ENCODE measurements at regions of chr2 and their contacts with region 1.

Region 1: DNA sequence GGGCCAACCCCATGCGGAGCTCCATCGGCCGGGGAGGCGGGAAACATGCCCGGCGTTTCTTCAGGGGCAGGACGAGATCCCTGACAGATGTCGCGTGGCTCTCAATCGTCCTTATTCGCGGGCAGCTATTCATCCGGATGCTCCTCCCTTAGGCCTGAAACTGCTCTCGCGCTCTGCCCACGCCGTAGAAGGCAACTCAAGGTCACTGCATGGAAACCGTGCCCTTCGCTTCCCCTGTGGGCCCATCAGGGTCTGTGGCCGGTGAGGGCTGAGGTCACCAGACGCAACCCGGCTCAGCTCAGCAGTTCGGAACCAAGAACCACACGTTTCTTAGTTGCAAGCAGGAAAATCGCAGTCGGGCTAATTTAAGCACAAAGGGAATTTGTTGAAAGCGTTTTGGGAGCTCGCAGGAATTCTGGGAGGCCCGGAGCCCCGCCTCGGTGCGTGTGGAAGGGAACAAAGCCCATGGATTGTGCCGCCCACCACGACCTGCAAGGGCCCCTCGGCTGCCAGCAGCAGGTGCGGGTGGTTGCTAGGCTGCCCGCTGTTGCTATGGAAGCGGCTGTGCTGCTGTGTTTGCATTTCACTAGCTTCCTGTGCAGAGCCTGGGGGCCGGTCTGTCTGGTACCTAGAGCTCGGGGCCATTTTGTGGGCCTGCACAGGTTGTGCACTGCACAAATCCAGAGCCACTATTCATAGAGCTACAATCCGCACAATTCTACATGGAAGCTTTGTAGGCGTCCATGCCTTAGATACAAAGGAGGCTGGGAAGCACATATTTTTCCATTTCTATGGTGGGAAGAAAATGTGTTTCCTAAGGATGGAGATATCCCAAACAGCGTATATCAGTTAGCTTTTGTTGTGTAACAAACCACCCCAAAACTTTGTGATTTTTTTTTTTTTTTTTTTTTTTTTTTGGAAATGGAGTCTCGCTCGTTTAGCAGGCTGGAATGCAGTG is 6.0 kb upstream of the ALLC start:
- DNase-seq: no peak
- ATAC-seq: no peak
- H3K4me3 ChIP-seq: no peak overlapping the region
- H3K27ac ChIP-seq: no peak overlapping the region
- H3K4me1 ChIP-seq: peaks cover 0 to 28% of the 10 kb centered on the region in 2 experiments; a peak in 3 of 5 replicates
- H3K27me3 ChIP-seq: peaks cover 54 to 92% of the 10 kb centered on the region in 2 experiments
- CTCF ChIP-seq: no peak
- EP300 ChIP-seq: no peak
- POLR2A ChIP-seq: no peak
- RAD21 ChIP-seq: no peak

Region 2: GRCh38 chr2:3423492-3424175 is 228.3 kb before region 1 on chr2:
- CTCF ChIA-PET with region 1: no interaction called
- POLR2A ChIA-PET with region 1: no interaction called
- in situ Hi-C with region 1: loop called (anchors 10 kb)
- intact Hi-C with region 1: loop called (anchors 5 kb)
- DNase-seq: peak; percentile 74 to 82 (median 77)
- ATAC-seq: peak; percentile 96
- H3K4me3 ChIP-seq: no peak overlapping the region
- H3K27ac ChIP-seq: no peak overlapping the region
- H3K4me1 ChIP-seq: peaks cover 0 to 2% of the 10 kb centered on the region in 2 experiments; a peak in 2 of 5 replicates
- H3K27me3 ChIP-seq: no peaks in the 10 kb centered on the region
- CTCF ChIP-seq: peak; percentile 78 to 98 (median 82)
- EP300 ChIP-seq: no peak
- POLR2A ChIP-seq: no peak
- RAD21 ChIP-seq: peak; percentile 11 to 63; a peak in 2 of 4 replicates

Region 3: GRCh38 chr2:3493615-3494007 is 158.4 kb before region 1 on chr2:
- CTCF ChIA-PET with region 1: no interaction called
- POLR2A ChIA-PET with region 1: interaction called, 4 read pairs
- in situ Hi-C with region 1: loop called (anchors 10 kb)
- intact Hi-C with region 1: loop called (anchors 1 kb)
- DNase-seq: peak; percentile 85 to 93 (median 86)
- ATAC-seq: peak; percentile 99
- H3K4me3 ChIP-seq: peak overlapping the region; percentile 21
- H3K27ac ChIP-seq: peak overlapping the region; percentile 60
- H3K4me1 ChIP-seq: peaks cover 12 to 36% of the 10 kb centered on the region in 2 experiments; a peak in 4 of 5 replicates
- H3K27me3 ChIP-seq: no peaks in the 10 kb centered on the region
- CTCF ChIP-seq: no peak
- EP300 ChIP-seq: no peak
- POLR2A ChIP-seq: no peak
- RAD21 ChIP-seq: no peak

Region 4: GRCh38 chr2:3575534-3576262 is 76.3 kb before region 1 on chr2:
- CTCF ChIA-PET with region 1: no interaction called
- POLR2A ChIA-PET with region 1: interaction called, 3 read pairs
- in situ Hi-C with region 1: no loop called
- intact Hi-C with region 1: loop called (anchors 5 kb)
- DNase-seq: peak; percentile 29 to 82 (median 62)
- ATAC-seq: peak; percentile 63
- H3K4me3 ChIP-seq: peak overlapping the region; percentile 98
- H3K27ac ChIP-seq: peak overlapping the region; percentile 86
- H3K4me1 ChIP-seq: peaks cover 14% of the 10 kb centered on the region in 2 experiments
- H3K27me3 ChIP-seq: no peaks in the 10 kb centered on the region
- CTCF ChIP-seq: no peak
- EP300 ChIP-seq: no peak
- POLR2A ChIP-seq: no peak
- RAD21 ChIP-seq: 0 out of 4 replicates have a peak, but pooled peaks of 1 of the 2 experiments have one; percentile 3

Region 5: GRCh38 chr2:3692381-3692780 is 40.4 kb after region 1 on chr2:
- CTCF ChIA-PET with region 1: no interaction called
- POLR2A ChIA-PET with region 1: no interaction called
- in situ Hi-C with region 1: no loop called
- intact Hi-C with region 1: no loop called
- DNase-seq: peak in 2 of 4 experiments; percentile 11 to 12
- ATAC-seq: peak; percentile 61
- H3K4me3 ChIP-seq: no peak overlapping the region
- H3K27ac ChIP-seq: no peak overlapping the region
- H3K4me1 ChIP-seq: no peaks in the 10 kb centered on the region
- H3K27me3 ChIP-seq: peaks cover 3 to 8% of the 10 kb centered on the region in 2 experiments; a peak in 2 of 5 replicates
- CTCF ChIP-seq: peak; percentile 14 to 49 (median 29); a peak in 2 of 6 replicates
- EP300 ChIP-seq: no peak
- POLR2A ChIP-seq: no peak
- RAD21 ChIP-seq: peak in 1 of 2 experiments; percentile 43; a peak in 2 of 4 replicates

Measured in K562 (cell line).